T-cell (primary cell): ENCODE measurements at regions of chr11 and their contacts with region 1.

Region 1: GRCh38 chr11:66659763-66660162 is 17.9 kb downstream of the RBM4B start:
- DNase-seq: no peak
- ATAC-seq: no peak
- H3K4me3 ChIP-seq: no peak overlapping the region
- H3K4me3 Mint-ChIP-seq: no peak overlapping the region
- H3K27ac ChIP-seq: no peak overlapping the region
- H3K27ac Mint-ChIP-seq: no peak overlapping the region
- H3K4me1 ChIP-seq: no peaks in the 10 kb centered on the region
- H3K4me1 Mint-ChIP-seq: peaks cover 18 to 30% (median 21%) of the 10 kb centered on the region in 3 donors
- H3K27me3 ChIP-seq: no peaks in the 10 kb centered on the region
- H3K27me3 Mint-ChIP-seq: no peaks in the 10 kb centered on the region

Region 2: DNA sequence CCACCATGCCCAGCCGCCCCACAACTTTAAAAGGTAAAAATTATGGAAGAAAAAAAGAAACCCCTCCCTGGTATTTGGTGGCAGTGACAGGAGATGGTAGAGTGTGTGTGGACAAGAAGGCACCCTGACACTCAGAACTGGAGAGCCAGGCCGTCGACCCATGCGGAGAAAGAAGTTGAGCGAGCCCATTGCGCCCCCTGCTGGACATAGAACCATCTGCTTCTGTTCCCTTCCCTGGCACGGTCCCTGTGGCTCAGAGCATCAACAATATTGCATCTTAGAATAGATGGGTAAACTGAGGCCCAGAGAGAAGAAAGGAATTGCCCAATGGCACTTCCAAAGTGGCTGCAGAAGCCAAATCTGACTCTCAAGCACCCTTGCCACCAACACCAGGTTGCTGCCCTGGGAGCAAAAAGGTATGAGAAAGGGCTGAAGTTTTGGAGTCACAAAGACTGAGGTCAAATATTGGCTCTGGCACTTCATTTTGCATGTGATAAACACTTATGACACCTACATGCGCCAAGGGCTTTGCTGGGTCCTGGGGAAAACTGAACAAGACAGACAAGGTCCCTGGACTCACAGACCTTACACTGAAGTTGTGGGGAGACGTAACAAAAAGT is 229.7 kb before region 1 on chr11:
- CTCF ChIA-PET with region 1: no interaction called
- POLR2A ChIA-PET with region 1: no interaction called
- DNase-seq: peak; percentile 14 to 85 (median 59)
- ATAC-seq: peak; percentile 54 to 79 (median 68)
- H3K4me3 ChIP-seq: no peak overlapping the region
- H3K4me3 Mint-ChIP-seq: no peak overlapping the region
- H3K27ac ChIP-seq: no peak overlapping the region
- H3K27ac Mint-ChIP-seq: no peak overlapping the region
- H3K4me1 ChIP-seq: no peaks in the 10 kb centered on the region
- H3K4me1 Mint-ChIP-seq: peaks cover 0 to 2% (median 0%) of the 10 kb centered on the region in 3 donors
- H3K27me3 ChIP-seq: peaks cover 0 to 11% of the 10 kb centered on the region in 2 experiments
- H3K27me3 Mint-ChIP-seq: no peaks in the 10 kb centered on the region

Region 3: GRCh38 chr11:66480117-66480938 is 179.4 kb before region 1 on chr11 and contains the start of gene DPP3:
- CTCF ChIA-PET with region 1: no interaction called
- POLR2A ChIA-PET with region 1: no interaction called
- DNase-seq: peak; percentile 86 to 98 (median 95)
- ATAC-seq: peak; percentile 98 to 99 (median 98)
- H3K4me3 ChIP-seq: peak within 1 kb of the TSS; percentile 72 to 89
- H3K4me3 Mint-ChIP-seq: peak within 1 kb of the TSS; percentile 85 to 91 (median 87)
- H3K27ac ChIP-seq: peak within 1 kb of the TSS; percentile 58
- H3K27ac Mint-ChIP-seq: peak within 1 kb of the TSS; percentile 78 to 92
- H3K4me1 ChIP-seq: peaks cover 3 to 23% of the 10 kb centered on the region in 2 experiments
- H3K4me1 Mint-ChIP-seq: peaks cover 22 to 28% (median 25%) of the 10 kb centered on the region in 3 donors
- H3K27me3 ChIP-seq: no peaks in the 10 kb centered on the region
- H3K27me3 Mint-ChIP-seq: no peaks in the 10 kb centered on the region
- total RNA-seq, gene DPP3: 20.7 to 34.6 (median 29.5) TPM

Region 4: GRCh38 chr11:66600631-66601233 is 59.0 kb before region 1 on chr11:
- CTCF ChIA-PET with region 1: no interaction called
- POLR2A ChIA-PET with region 1: interaction called in 1 of 2 experiments, 10 read pairs
- DNase-seq: no peak
- ATAC-seq: no peak
- H3K4me3 ChIP-seq: no peak overlapping the region
- H3K4me3 Mint-ChIP-seq: no peak overlapping the region
- H3K27ac ChIP-seq: no peak overlapping the region
- H3K27ac Mint-ChIP-seq: no peak overlapping the region
- H3K4me1 ChIP-seq: peaks cover 0 to 3% of the 10 kb centered on the region in 2 experiments
- H3K4me1 Mint-ChIP-seq: peaks cover 4 to 8% (median 7%) of the 10 kb centered on the region in 3 donors
- H3K27me3 ChIP-seq: no peaks in the 10 kb centered on the region
- H3K27me3 Mint-ChIP-seq: no peaks in the 10 kb centered on the region